HepG2 (cell line): ENCODE measurements at regions of chr22 and their contacts with region 1.

Region 1: DNA sequence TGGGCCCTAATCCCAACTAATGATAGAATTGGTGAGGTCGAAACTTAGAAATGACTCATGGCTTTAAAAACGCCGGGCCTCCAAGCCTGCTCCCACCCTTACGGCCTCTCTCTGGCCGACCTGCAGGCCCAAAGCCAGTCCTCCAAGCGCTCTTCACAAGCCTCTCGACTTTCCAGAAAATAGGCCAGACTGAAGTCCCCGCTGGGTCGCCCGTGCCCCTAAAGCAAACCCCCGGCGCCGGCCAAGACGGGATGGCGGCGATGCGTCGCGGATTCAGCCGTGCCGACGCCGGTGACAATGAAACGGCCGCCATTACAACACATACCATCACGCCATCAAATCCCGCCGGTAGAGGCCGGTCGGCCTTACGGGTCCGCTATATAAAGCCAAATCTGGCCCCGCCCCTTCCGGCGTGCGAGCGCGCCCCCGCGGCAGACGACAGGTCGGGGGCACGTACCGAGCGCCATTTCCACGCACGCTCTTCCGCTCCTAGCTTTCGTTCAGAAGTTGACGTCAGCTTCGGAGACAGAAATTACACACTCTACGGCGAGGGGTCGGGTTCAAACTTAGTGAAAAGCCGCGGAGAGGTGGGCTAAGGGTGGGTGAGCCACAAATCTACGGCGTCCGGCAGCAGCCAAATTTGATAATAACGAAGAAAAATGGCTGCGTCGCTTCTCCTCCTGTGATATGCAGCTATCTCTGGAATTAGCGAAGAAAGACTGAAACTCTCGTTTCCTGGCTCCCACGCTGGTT is at the start of gene RPL3:
- DNase-seq: peak; percentile 98
- ATAC-seq: peak; percentile 65
- H3K4me3 ChIP-seq: peak within 1 kb of the TSS; percentile 76 to 94 (median 87)
- H3K27ac ChIP-seq: peak within 1 kb of the TSS; percentile 97
- H3K4me1 ChIP-seq: peaks cover 51% of the 10 kb centered on the region
- H3K27me3 ChIP-seq: no peaks in the 10 kb centered on the region; a peak in 1 of 5 replicates
- CTCF ChIP-seq: peak; percentile 42; the same call in 1 of the 2 replicates
- EP300 ChIP-seq: peak in 1 of 2 experiments; percentile 4; a peak in 1 of 4 replicates
- POLR2A ChIP-seq: peak; percentile 99 to 100
- RAD21 ChIP-seq: peak; percentile 52; the same call in 1 of the 2 replicates
- total RNA-seq, gene RPL3: 1,051 and 1,499 TPM in 2 replicates

Region 2: GRCh38 chr22:39230261-39231196 is 88.9 kb before region 1 on chr22:
- CTCF ChIA-PET with region 1: no interaction called
- POLR2A ChIA-PET with region 1: interaction called, 11 read pairs
- in situ Hi-C with region 1: no loop called
- intact Hi-C with region 1: no loop called
- DNase-seq: peak; percentile 90
- ATAC-seq: peak; percentile 72
- H3K4me3 ChIP-seq: peak overlapping the region in 1 of 3 experiments; percentile 5; a peak in 1 of 6 replicates
- H3K27ac ChIP-seq: no peak overlapping the region
- H3K4me1 ChIP-seq: peaks cover 21% of the 10 kb centered on the region
- H3K27me3 ChIP-seq: no peaks in the 10 kb centered on the region
- CTCF ChIP-seq: no peak; the same call in 1 of the 2 replicates
- EP300 ChIP-seq: peak in 1 of 2 experiments; percentile 79; a peak in 2 of 4 replicates
- POLR2A ChIP-seq: no peak
- RAD21 ChIP-seq: no peak

Region 3: DNA sequence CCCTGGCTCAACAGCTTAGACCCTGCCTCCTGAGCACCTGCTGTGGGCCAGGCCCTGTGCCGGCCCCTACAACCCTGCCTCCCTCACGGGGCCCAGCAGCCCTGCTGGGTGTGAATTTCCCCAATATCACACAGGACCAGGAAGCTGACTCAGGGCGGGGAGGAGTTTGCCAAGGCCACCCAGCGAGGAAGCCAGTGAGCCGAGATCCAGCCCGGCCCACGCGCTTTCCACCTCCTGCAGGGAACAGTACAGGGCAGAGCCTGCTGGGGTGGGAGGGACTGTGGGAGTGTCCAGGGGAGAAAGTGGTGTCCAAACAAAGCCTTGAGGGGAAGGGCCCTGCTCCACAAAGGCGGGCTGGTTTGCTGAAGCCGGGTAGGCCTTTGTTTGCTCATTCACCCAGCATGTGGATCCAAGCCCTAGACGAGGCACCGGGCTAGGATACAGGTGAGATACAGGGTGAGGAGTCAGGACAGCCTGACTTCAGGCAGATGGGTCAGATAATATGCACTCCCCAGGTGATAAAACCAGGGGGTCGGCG is 26.8 kb before region 1 on chr22:
- CTCF ChIA-PET with region 1: no interaction called
- POLR2A ChIA-PET with region 1: interaction called, 40 read pairs
- in situ Hi-C with region 1: no loop called
- intact Hi-C with region 1: no loop called
- DNase-seq: peak; percentile 81
- ATAC-seq: peak; percentile 65
- H3K4me3 ChIP-seq: peak overlapping the region in 1 of 3 experiments; percentile 35; a peak in 1 of 6 replicates
- H3K27ac ChIP-seq: no peak overlapping the region
- H3K4me1 ChIP-seq: peaks cover 90% of the 10 kb centered on the region
- H3K27me3 ChIP-seq: peaks cover 5 to 13% of the 10 kb centered on the region in 2 experiments; a peak in 4 of 5 replicates
- CTCF ChIP-seq: no peak
- EP300 ChIP-seq: no peak
- POLR2A ChIP-seq: no peak
- RAD21 ChIP-seq: no peak

Region 4: DNA sequence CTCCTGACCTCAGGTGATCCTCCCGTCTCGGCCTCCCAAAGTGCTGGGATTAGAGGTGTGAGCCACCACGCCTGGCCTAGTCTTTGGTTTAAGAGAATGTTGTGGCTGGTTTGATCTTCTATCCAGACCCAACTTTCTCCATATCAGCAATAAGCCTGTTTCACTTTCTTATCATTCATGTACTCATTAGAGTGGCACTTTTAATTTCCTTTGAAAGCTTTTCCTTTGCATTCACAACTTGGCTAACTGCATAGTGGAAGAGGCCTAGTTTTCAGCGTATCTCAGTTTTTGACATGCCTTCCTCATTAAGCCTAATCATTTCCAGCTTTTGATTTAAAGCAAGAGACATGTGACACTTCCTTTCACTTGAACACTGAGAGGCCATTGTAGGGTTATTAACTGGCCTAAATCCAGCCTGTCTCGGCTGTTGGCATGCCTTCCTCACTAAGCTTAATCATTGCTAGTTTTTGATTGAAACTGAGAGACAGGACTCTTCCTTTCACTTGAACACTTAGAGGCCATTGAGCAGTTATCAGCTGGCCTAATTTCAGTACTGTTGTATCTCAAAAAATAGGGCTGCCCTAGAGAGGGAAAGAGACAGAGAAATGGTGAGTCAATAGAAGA is 13.1 kb after region 1 on chr22:
- CTCF ChIA-PET with region 1: no interaction called
- POLR2A ChIA-PET with region 1: interaction called, 67 read pairs
- in situ Hi-C with region 1: no loop called
- intact Hi-C with region 1: no loop called
- DNase-seq: no peak
- ATAC-seq: peak; percentile 29; the same call in 1 of the 3 replicates
- H3K4me3 ChIP-seq: no peak overlapping the region
- H3K27ac ChIP-seq: no peak overlapping the region
- H3K4me1 ChIP-seq: peaks cover 31% of the 10 kb centered on the region
- H3K27me3 ChIP-seq: 0 out of 5 replicates have a peak, but pooled peaks cover 0 to 2% of the 10 kb centered on the region in 2 experiments
- CTCF ChIP-seq: no peak
- EP300 ChIP-seq: no peak
- POLR2A ChIP-seq: no peak
- RAD21 ChIP-seq: no peak

Region 5: GRCh38 chr22:39502109-39502788 is 182.8 kb after region 1 on chr22 and contains the start of gene MIEF1:
- CTCF ChIA-PET with region 1: no interaction called
- POLR2A ChIA-PET with region 1: interaction called, 11 read pairs
- in situ Hi-C with region 1: no loop called
- intact Hi-C with region 1: no loop called
- DNase-seq: peak; percentile 96
- ATAC-seq: peak; percentile 95
- H3K4me3 ChIP-seq: peak within 1 kb of the TSS; percentile 80 to 93 (median 91)
- H3K27ac ChIP-seq: peak within 1 kb of the TSS; percentile 94
- H3K4me1 ChIP-seq: peaks cover 64% of the 10 kb centered on the region
- H3K27me3 ChIP-seq: no peaks in the 10 kb centered on the region
- CTCF ChIP-seq: no peak; the same call in 1 of the 2 replicates
- EP300 ChIP-seq: no peak
- POLR2A ChIP-seq: peak; percentile 71 to 85
- RAD21 ChIP-seq: no peak
- total RNA-seq, gene MIEF1: 34.8 and 41.4 TPM in 2 replicates

Region 6: GRCh38 chr22:40044102-40044869 is 724.8 kb after region 1 on chr22:
- CTCF ChIA-PET with region 1: no interaction called
- POLR2A ChIA-PET with region 1: interaction called, 11 read pairs
- in situ Hi-C with region 1: no loop called
- intact Hi-C with region 1: no loop called
- DNase-seq: peak; percentile 98
- ATAC-seq: peak; percentile 95
- H3K4me3 ChIP-seq: peak overlapping the region; percentile 72 to 95 (median 73)
- H3K27ac ChIP-seq: peak overlapping the region; percentile 77
- H3K4me1 ChIP-seq: peaks cover 16% of the 10 kb centered on the region
- H3K27me3 ChIP-seq: peaks cover 0 to 3% of the 10 kb centered on the region in 2 experiments; a peak in 1 of 5 replicates
- CTCF ChIP-seq: no peak
- EP300 ChIP-seq: no peak
- POLR2A ChIP-seq: peak; percentile 59 to 86
- RAD21 ChIP-seq: no peak